ENCODE measurements at regions of chr1 and their contacts with region 1.

Region 1: GRCh38 chr1:185404291-185404690 is 87.2 kb upstream of the IVNS1ABP start:
- DNase-seq: no peak
- ATAC-seq: no peak
- H3K4me3 Mint-ChIP-seq: no peak overlapping the region
- H3K27ac Mint-ChIP-seq: no peak overlapping the region
- H3K4me1 Mint-ChIP-seq: peaks cover 45% of the 10 kb centered on the region
- H3K27me3 Mint-ChIP-seq: no peaks in the 10 kb centered on the region
- CTCF ChIP-seq: no peak

Region 2: GRCh38 chr1:185338719-185339622 is 65.3 kb before region 1 on chr1:
- CTCF ChIA-PET with region 1: no interaction called
- POLR2A ChIA-PET with region 1: interaction called, 3 read pairs
- intact Hi-C with region 1: loop called (anchors 2 kb)
- DNase-seq: no peak
- ATAC-seq: peak; percentile 85
- H3K4me3 Mint-ChIP-seq: peak overlapping the region; percentile 71
- H3K27ac Mint-ChIP-seq: peak overlapping the region; percentile 95
- H3K4me1 Mint-ChIP-seq: peaks cover 35% of the 10 kb centered on the region
- H3K27me3 Mint-ChIP-seq: no peaks in the 10 kb centered on the region
- CTCF ChIP-seq: no peak

Region 3: DNA sequence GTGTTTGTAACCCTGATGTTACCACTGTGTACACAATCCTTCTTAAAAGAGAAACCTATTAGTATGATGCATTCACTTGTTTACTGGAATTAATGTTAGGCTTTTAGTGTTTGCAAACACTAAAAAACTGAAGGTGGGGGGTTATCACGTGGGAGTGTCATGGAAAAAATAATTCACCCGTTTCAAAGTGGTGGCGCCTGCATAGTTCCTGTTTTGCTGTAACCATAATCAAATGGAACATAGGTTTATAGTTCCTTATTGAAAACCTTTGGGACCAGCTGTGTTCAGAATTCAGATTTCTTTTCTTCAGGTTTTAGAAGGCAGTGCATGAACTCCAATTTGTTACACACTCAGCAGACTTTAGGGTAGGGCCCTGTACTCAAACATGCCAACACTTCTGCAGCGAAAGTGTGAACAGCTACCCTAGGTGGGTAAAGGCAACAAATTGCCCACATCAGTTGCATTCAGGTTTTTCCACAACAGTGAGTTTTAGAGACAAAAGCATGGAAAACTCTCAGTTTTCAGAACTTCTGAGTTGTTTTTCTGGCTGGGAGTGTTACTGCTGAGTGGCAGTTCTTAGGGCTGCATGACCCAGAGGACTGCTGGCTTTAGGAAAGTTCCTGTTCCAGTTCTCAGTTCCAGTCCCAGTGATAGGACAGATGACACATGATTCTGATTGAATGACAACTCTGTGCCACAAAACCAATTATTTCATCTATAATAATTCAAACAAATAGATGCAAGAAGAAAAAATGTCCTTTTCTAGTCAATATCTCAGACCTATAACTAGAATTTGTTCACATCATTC is 58.2 kb before region 1 on chr1:
- CTCF ChIA-PET with region 1: no interaction called
- POLR2A ChIA-PET with region 1: no interaction called
- intact Hi-C with region 1: loop called (anchors 2 kb)
- DNase-seq: no peak
- ATAC-seq: peak; percentile 79
- H3K4me3 Mint-ChIP-seq: peak overlapping the region; percentile 47
- H3K27ac Mint-ChIP-seq: peak overlapping the region; percentile 24
- H3K4me1 Mint-ChIP-seq: peaks cover 29% of the 10 kb centered on the region
- H3K27me3 Mint-ChIP-seq: no peaks in the 10 kb centered on the region
- CTCF ChIP-seq: no peak

Region 4: DNA sequence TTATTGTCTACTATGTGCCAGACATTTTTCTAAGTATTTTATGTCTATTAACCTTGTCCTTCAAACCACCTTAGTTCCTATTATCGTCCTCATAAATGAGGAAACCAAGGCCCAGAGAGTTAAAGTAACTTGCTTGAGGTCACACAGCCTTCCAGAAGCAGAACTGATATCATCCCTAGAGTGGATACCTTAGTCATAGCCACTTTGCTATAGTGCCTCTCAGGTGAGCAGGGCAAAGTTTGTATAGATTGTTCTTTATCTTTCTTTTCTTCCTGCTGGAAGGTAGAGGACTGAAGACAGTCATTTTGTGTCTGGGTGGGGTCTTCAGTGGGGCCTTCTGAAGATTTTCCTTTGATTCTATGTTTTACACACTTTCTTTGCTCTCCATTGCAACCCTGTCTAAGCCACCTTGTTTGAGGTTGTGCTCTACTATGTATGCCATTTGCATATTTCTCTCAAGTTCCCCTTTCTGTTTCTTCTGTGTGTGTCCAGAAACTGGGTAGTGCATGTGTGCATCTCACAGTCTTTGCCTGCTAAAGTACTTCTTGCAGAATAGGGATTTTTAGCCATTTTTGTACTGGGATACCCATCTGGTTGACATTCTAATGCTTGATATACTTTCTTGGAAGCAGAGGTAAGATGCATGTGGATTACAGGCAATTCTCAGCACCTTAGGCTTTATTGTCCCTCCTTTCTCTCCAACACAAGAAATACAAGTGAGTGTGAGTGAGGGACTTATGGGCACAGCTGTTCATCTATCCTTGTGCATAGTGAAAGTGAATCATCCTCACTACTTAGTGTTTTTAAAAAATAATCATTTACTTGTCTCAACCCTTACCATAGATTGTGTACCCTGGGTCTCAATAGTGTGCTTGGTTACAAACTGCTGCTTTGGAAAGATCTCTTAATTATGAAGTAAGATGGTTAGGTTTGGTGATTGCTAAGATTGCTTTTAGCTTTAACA is 122.3 kb after region 1 on chr1:
- CTCF ChIA-PET with region 1: no interaction called
- POLR2A ChIA-PET with region 1: interaction called, 3 read pairs
- intact Hi-C with region 1: loop called (anchors 2 kb)
- DNase-seq: no peak
- ATAC-seq: peak; percentile 97
- H3K4me3 Mint-ChIP-seq: peak overlapping the region; percentile 1
- H3K27ac Mint-ChIP-seq: peak overlapping the region; percentile 77
- H3K4me1 Mint-ChIP-seq: peaks cover 21% of the 10 kb centered on the region
- H3K27me3 Mint-ChIP-seq: no peaks in the 10 kb centered on the region
- CTCF ChIP-seq: no peak

Region 5: GRCh38 chr1:185603158-185603557 is 198.9 kb after region 1 on chr1:
- CTCF ChIA-PET with region 1: interaction called, 4 read pairs
- POLR2A ChIA-PET with region 1: interaction called, 11 read pairs
- intact Hi-C with region 1: loop called (anchors 2 kb)
- DNase-seq: peak; percentile 26
- ATAC-seq: peak; percentile 92
- H3K4me3 Mint-ChIP-seq: no peak overlapping the region
- H3K27ac Mint-ChIP-seq: no peak overlapping the region
- H3K4me1 Mint-ChIP-seq: peaks cover 42% of the 10 kb centered on the region
- H3K27me3 Mint-ChIP-seq: no peaks in the 10 kb centered on the region
- CTCF ChIP-seq: no peak

Region 6: DNA sequence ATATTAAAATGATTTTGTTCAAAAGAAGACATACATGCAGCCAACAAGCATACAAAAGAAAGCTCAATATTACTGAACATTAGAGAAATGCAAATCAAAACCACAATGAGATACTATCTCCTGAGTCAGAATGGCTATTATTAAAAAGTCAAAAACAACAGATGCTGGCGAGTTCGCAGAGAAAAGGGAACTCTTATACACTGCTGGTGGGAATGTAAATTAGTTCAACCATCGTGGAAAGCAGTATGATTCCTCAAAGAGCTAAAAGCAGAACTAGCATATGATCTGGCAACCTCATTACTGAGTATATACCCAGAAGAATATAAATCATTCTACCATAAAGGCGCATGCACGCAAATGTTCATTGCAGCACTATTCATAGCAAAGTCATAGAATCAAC is 203.9 kb after region 1 on chr1:
- CTCF ChIA-PET with region 1: interaction called, 4 read pairs
- POLR2A ChIA-PET with region 1: interaction called, 11 read pairs
- intact Hi-C with region 1: loop called (anchors 2 kb)
- DNase-seq: no peak
- ATAC-seq: peak; percentile 83
- H3K4me3 Mint-ChIP-seq: no peak overlapping the region
- H3K27ac Mint-ChIP-seq: peak overlapping the region; percentile 26
- H3K4me1 Mint-ChIP-seq: peaks cover 63% of the 10 kb centered on the region
- H3K27me3 Mint-ChIP-seq: no peaks in the 10 kb centered on the region
- CTCF ChIP-seq: no peak